BJ (cell line): ENCODE measurements at regions of chr18 and their contacts with region 1.

Region 1: DNA sequence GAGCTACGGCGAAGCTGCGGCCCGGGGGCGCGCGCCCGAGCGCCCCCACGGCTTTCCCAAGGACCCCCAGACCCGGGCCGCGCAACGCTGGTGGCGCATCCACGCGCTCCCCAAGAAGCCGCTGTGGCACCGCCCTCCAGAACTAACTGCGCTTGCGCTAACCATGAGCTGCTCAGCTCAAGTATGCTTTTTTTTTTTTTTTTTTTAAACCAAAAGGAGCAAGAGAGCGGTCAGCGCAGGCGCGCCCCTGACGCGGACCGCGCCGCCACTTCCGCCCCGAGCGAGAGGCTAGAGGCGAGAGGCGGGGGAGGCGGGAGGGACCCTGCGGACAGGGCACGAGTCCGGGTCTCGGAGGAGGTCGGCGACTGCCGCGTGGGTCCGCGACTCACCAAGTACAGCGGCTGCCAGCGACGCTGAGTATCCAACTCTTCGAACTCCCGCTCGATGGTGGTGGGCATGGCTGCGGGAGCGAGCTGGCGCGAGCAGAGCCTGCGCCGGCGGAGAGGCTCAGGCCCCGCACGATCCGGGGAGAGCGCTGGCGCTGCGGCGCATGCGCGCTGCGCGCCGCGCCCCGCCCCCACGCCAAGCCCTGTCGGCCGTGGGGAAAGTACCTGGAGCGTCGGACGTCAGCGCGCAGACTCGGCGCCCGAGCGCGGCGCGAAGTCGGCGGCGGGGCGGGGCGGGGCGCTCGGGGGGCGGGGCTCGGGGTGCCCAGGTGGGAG is at the start of gene PTPN2:
- DNase-seq: peak; percentile 72
- H3K4me3 ChIP-seq: peak within 1 kb of the TSS; percentile 85
- H3K27me3 ChIP-seq: no peaks in the 10 kb centered on the region
- CTCF ChIP-seq: no peak
- polyA plus RNA-seq, gene PTPN2: 14.5 and 19.0 TPM in 2 replicates

Region 2: DNA sequence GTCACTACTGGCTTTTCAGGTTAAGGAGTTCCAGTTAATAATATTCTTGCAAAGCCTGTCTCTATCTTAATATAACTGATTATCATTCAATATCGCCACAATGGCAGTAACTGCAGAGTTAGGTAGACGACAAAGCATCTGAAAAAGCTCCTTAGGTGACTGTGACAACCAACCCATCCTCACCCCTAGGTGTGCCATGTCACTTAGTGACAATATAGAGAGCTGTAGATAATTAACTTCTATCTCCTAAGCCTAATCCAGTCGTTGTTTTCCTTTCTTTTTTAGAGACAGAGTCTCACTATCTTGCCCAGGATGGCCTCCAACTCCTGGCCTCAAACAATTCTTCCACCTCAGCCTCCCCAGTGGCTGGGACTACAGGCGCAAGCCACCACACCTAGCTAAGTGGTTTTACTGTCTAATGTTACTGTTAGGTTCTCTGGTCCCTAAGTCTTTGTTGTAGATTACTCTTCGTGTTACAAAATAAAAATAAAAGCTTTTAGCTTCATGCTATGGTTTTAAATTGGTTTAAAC is 291.2 kb before region 1 on chr18:
- CTCF ChIA-PET with region 1: no interaction called
- POLR2A ChIA-PET with region 1: interaction called, 10 read pairs
- DNase-seq: no peak
- H3K4me3 ChIP-seq: no peak overlapping the region
- H3K27me3 ChIP-seq: no peaks in the 10 kb centered on the region
- CTCF ChIP-seq: no peak

Region 3: GRCh38 chr18:12702221-12703095 is 181.4 kb before region 1 on chr18 and contains the starts of genes CEP76 and PSMG2:
- CTCF ChIA-PET with region 1: no interaction called
- POLR2A ChIA-PET with region 1: interaction called, 14 read pairs
- DNase-seq: peak; percentile 39
- H3K4me3 ChIP-seq: peak within 1 kb of the TSS; percentile 98
- H3K27me3 ChIP-seq: no peaks in the 10 kb centered on the region
- CTCF ChIP-seq: peak; percentile 16; the same call in 1 of the 2 replicates
- polyA plus RNA-seq, gene CEP76: 4.0 and 6.8 TPM in 2 replicates
- polyA plus RNA-seq, gene PSMG2: 60.8 and 85.7 TPM in 2 replicates

Region 4: DNA sequence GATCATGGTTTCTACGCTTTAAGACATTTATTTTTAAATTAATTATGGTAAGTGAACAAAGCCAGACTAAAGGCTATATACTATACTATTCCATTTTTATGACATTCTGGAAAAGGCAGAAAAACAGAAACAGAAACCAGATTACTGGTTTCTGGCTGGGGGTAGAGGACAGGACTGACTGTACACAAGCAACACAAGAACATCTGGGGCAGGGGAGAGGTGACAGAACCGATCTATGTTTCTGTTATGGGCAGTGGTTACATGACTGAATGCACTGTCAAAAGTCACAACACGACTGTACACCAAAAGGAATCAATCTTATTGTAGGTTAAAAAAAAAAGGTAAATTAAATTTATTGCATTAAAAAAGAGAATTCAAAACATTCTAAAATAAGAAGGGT is 64.5 kb before region 1 on chr18:
- CTCF ChIA-PET with region 1: no interaction called
- POLR2A ChIA-PET with region 1: interaction called, 15 read pairs
- DNase-seq: no peak
- H3K4me3 ChIP-seq: no peak overlapping the region
- H3K27me3 ChIP-seq: no peaks in the 10 kb centered on the region
- CTCF ChIP-seq: no peak

Region 5: GRCh38 chr18:12872408-12872807 is 11.4 kb before region 1 on chr18:
- CTCF ChIA-PET with region 1: no interaction called
- POLR2A ChIA-PET with region 1: no interaction called
- DNase-seq: no peak
- H3K4me3 ChIP-seq: no peak overlapping the region
- H3K27me3 ChIP-seq: no peaks in the 10 kb centered on the region
- CTCF ChIP-seq: no peak

Region 6: GRCh38 chr18:13014232-13014631 is 130.4 kb after region 1 on chr18:
- CTCF ChIA-PET with region 1: no interaction called
- POLR2A ChIA-PET with region 1: interaction called, 13 read pairs
- DNase-seq: no peak
- H3K4me3 ChIP-seq: no peak overlapping the region
- H3K27me3 ChIP-seq: no peaks in the 10 kb centered on the region
- CTCF ChIP-seq: no peak

Region 7: DNA sequence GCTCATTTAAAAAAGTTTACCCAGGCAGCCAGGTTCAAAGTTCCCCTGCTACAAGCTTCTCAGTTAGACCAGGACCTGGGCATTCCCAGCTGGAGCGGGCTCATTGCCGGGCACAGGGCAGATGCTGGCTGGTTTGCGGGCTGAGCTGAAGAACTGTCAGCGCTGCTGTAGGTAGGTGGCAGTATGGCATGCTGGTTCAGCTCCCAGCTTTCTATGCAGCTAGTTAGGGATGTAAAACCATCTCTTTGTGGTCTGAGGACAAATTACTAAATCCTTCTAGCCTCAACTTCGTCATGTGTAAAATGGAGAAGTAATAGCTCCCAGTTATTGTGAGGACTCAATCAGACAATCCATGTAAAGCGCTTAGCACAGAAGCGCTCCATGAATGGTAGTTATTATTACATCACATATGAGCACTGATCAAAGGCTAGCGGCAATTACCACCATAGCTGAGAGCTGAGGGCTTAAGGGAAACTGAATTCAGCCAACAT is 332.3 kb after region 1 on chr18:
- CTCF ChIA-PET with region 1: no interaction called
- POLR2A ChIA-PET with region 1: no interaction called
- DNase-seq: peak; percentile 7
- H3K4me3 ChIP-seq: no peak overlapping the region
- H3K27me3 ChIP-seq: peaks cover 22% of the 10 kb centered on the region
- CTCF ChIP-seq: peak; percentile 64